Caco-2 (cell line): ENCODE measurements at regions of chr10 and their contacts with region 1.

Region 1: DNA sequence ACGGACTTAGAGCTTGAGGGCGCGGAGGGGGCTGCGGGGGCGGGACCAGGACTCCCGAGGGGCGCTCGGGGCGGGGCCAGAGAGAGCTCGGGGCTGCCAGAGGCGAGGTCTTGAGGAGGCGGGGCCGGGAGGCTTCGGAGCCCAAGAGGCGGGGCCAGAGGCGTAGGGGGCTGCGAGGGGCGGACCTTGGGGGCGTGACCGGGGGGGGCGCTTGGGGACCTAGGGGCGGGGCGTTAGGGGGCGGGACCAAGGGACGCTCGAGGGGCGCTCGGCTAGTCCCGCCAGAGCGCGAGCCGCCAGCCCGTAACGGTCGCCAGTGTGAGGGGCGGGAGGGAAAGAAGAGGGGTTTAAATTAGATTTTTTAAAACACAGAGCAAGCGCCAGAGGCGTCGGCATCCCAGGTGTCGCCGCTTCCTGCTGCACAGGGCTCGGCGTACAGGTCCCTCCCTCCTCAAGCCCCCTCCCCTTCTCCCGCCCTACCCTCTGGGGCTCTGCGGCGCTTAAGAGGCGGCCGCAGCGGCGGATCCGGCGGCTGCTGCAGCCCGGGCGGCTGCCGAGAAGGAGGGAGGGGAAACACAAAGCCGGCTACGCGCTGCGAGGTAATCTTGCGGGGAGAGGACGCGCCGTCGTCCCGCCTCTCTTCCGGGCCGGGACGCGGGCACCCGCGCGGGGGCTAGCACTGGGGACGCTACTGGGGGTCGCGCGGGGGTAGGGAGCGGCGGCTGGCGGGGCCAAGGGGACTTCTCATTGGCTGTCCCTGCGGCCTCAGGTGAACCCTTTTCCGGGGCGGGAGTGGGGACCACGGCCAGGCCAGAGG is at the start of gene ADD3:
- DNase-seq: peak; percentile 96 to 97
- H3K4me3 ChIP-seq: peak within 1 kb of the TSS; percentile 94
- H3K4me3 Mint-ChIP-seq: no peak within 1 kb of the TSS
- H3K27ac Mint-ChIP-seq: no peak within 1 kb of the TSS
- H3K4me1 ChIP-seq: peaks cover 47% of the 10 kb centered on the region
- H3K4me1 Mint-ChIP-seq: peaks cover 11% of the 10 kb centered on the region
- H3K27me3 ChIP-seq: no peaks in the 10 kb centered on the region
- H3K27me3 Mint-ChIP-seq: no peaks in the 10 kb centered on the region
- CTCF ChIP-seq: no peak
- total RNA-seq, gene ADD3: 236 and 264 TPM in 2 replicates

Region 2: GRCh38 chr10:108612485-108612884 is 1395.4 kb before region 1 on chr10:
- CTCF ChIA-PET with region 1: no interaction called
- POLR2A ChIA-PET with region 1: no interaction called
- intact Hi-C with region 1: no loop called
- DNase-seq: no peak
- H3K4me3 ChIP-seq: no peak overlapping the region
- H3K4me3 Mint-ChIP-seq: no peak overlapping the region
- H3K27ac Mint-ChIP-seq: no peak overlapping the region
- H3K4me1 ChIP-seq: no peaks in the 10 kb centered on the region
- H3K4me1 Mint-ChIP-seq: no peaks in the 10 kb centered on the region
- H3K27me3 ChIP-seq: no peaks in the 10 kb centered on the region
- H3K27me3 Mint-ChIP-seq: no peaks in the 10 kb centered on the region
- CTCF ChIP-seq: no peak

Region 3: GRCh38 chr10:109875151-109875568 is 132.7 kb before region 1 on chr10:
- CTCF ChIA-PET with region 1: no interaction called
- POLR2A ChIA-PET with region 1: no interaction called
- intact Hi-C with region 1: no loop called
- DNase-seq: no peak
- H3K4me3 ChIP-seq: no peak overlapping the region
- H3K4me3 Mint-ChIP-seq: no peak overlapping the region
- H3K27ac Mint-ChIP-seq: no peak overlapping the region
- H3K4me1 ChIP-seq: 0 out of 2 replicates have a peak, but pooled peaks cover 3% of the 10 kb centered on the region
- H3K4me1 Mint-ChIP-seq: no peaks in the 10 kb centered on the region
- H3K27me3 ChIP-seq: no peaks in the 10 kb centered on the region
- H3K27me3 Mint-ChIP-seq: no peaks in the 10 kb centered on the region
- CTCF ChIP-seq: no peak

Region 4: DNA sequence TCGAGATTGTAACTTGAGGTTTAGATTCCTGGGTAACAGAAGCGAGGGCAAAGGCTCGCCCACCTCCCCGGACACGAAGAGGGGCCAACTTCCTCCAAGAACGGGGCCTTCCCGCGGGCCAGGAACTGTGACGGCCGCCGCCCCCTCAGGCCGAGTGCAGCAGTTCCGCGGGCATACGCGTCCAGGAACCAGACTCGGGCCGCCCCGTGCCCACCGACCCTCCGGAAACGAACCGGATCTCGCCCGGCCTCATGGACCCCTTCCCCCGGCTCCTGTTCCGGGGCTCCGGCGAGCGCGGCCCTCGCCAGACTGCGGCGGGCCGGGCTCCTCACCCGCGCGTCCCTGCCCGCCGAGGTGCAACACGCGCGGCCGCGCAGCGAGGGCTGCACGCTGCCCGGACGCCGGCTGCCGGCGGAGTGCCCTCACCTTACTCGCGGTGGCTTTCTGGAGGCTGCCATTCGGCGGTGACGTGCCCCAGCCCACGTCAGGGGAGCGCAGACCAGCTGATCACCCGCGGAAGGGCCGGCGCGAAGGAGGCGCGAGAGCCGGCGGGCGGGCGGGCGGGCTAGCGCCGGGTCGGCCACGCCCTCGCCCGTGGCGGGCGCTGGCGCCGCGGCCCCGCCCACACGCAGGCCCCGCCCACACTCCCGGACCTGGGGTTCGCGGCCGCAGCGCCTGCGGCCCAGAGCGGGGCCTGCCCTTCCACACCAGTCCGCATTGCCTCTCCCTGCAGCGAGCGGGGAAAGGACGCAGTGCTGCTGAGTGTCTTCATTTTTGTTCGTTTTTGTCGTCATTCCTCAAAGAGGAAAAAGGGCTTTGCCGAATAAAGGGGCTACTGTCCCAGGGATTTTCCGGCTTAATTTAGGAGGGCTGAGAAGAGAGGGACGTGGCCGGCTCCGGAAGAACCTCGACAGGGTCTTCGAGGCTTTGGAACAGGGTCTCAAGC is 84.7 kb before region 1 on chr10 and contains the start of gene XPNPEP1:
- CTCF ChIA-PET with region 1: no interaction called
- POLR2A ChIA-PET with region 1: interaction called, 4 read pairs
- intact Hi-C with region 1: loop called (anchors 2 kb)
- DNase-seq: peak; percentile 87 to 89
- H3K4me3 ChIP-seq: peak within 1 kb of the TSS; percentile 97
- H3K4me3 Mint-ChIP-seq: peak within 1 kb of the TSS; percentile 63
- H3K27ac Mint-ChIP-seq: peak within 1 kb of the TSS; percentile 87
- H3K4me1 ChIP-seq: peaks cover 34% of the 10 kb centered on the region
- H3K4me1 Mint-ChIP-seq: peaks cover 35% of the 10 kb centered on the region
- H3K27me3 ChIP-seq: no peaks in the 10 kb centered on the region
- H3K27me3 Mint-ChIP-seq: no peaks in the 10 kb centered on the region
- CTCF ChIP-seq: no peak
- total RNA-seq, gene XPNPEP1: 76.6 and 92.4 TPM in 2 replicates

Region 5: DNA sequence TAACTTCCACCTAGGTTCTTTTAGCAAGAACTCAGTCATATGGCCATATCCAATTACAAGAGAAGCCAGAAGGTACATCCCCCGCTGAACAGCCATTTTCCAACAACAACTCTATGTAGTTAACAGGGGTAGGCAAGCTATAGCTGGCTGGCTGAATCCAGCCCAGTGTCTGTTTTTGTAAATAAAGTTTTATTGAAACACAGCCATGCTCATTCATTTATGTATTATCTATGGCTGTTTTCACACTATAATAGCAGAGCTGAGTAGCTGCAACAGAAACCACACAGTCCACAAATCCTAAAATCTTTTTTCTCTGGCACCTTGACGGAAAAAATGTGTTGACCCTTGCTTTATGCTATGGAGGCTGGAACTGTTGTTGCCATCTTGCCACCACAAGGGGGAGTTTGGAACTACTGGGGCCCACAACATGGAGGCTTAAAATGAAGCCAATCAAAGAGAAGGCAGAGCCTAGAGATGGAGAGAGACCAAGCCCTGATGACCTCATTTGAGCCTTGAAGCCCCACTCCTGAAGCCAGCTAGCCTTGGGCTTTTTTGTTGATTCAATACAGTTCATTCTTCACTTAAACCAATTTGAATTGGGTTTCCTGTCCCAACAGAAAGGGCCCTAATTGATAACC is 51.3 kb before region 1 on chr10:
- CTCF ChIA-PET with region 1: interaction called, 4 read pairs
- POLR2A ChIA-PET with region 1: interaction called, 3 read pairs
- intact Hi-C with region 1: loop called (anchors 1 kb)
- DNase-seq: peak; percentile 63 to 67
- H3K4me3 ChIP-seq: no peak overlapping the region
- H3K4me3 Mint-ChIP-seq: no peak overlapping the region
- H3K27ac Mint-ChIP-seq: no peak overlapping the region
- H3K4me1 ChIP-seq: peaks cover 6% of the 10 kb centered on the region; the same call in 1 of the 2 replicates
- H3K4me1 Mint-ChIP-seq: peaks cover 19% of the 10 kb centered on the region
- H3K27me3 ChIP-seq: no peaks in the 10 kb centered on the region
- H3K27me3 Mint-ChIP-seq: no peaks in the 10 kb centered on the region
- CTCF ChIP-seq: peak; percentile 75 to 78

Region 6: DNA sequence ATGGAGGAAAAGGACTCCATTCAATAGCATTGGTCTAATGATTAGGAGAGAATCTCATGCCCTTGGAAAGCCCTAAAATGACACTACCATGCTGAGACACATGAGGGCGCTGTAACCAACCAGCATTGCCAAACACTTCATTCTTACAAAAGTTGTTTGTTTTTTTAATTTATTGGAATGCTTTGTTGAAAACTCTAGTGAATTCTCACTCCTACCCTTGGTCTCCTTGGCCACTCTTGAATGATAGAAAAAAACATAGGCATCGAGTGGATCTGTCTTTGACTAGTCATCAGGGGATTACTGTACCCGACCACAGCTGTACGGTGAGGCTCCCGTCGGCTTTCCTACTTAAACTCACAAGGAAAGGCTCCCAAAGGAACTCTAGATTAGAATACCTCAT is 29.4 kb before region 1 on chr10:
- CTCF ChIA-PET with region 1: interaction called, 11 read pairs
- POLR2A ChIA-PET with region 1: interaction called, 3 read pairs
- intact Hi-C with region 1: loop called (anchors 1 kb)
- DNase-seq: peak; percentile 45 to 60
- H3K4me3 ChIP-seq: no peak overlapping the region
- H3K4me3 Mint-ChIP-seq: peak overlapping the region; percentile 55
- H3K27ac Mint-ChIP-seq: peak overlapping the region; percentile 79
- H3K4me1 ChIP-seq: peaks cover 47% of the 10 kb centered on the region
- H3K4me1 Mint-ChIP-seq: peaks cover 69% of the 10 kb centered on the region
- H3K27me3 ChIP-seq: no peaks in the 10 kb centered on the region
- H3K27me3 Mint-ChIP-seq: no peaks in the 10 kb centered on the region
- CTCF ChIP-seq: peak; percentile 42 to 65

Region 7: GRCh38 chr10:109996225-109996624 is 11.7 kb before region 1 on chr10:
- CTCF ChIA-PET with region 1: interaction called, 7 read pairs
- POLR2A ChIA-PET with region 1: interaction called, 6 read pairs
- intact Hi-C with region 1: loop called (anchors 1 kb)
- DNase-seq: no peak
- H3K4me3 ChIP-seq: peak overlapping the region; percentile 28
- H3K4me3 Mint-ChIP-seq: peak overlapping the region; percentile 73
- H3K27ac Mint-ChIP-seq: peak overlapping the region; percentile 82
- H3K4me1 ChIP-seq: peaks cover 92% of the 10 kb centered on the region
- H3K4me1 Mint-ChIP-seq: peaks cover 54% of the 10 kb centered on the region
- H3K27me3 ChIP-seq: no peaks in the 10 kb centered on the region
- H3K27me3 Mint-ChIP-seq: no peaks in the 10 kb centered on the region
- CTCF ChIP-seq: no peak

Region 8: DNA sequence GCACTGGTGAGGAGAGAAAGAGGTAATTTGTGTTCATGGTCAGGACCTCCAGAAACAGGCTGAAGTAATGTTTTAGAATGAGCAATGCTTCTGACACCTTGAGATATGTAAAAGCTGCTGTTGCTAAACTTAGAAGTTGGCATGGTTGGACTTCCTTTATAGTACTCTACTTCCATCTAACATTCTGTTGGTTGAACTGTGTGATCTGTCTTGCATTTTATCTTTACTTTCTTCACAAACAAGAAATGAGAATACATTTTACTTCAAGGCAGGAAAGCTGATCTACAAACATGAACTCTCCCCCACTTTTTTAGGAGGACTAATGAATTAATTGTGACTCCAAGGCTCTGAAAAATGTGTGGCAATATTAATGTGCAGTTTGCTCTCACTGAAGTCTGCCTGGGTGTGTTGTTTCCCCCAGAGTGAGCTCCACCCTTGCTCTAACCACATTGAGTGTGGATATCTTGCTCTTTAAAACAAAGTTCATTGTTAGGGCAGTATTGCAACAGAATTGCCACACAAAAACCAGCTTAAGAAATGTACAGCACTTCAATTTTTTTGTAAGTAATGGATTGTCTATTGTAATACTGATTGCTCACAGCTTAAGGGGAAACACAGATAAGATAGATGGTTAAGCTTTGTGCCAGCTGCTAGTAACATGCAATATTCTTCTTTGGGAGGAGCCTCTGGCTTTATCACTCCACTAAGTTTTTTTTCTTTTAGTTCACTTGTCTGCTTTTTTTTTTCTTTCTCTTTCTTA is 68.8 kb after region 1 on chr10:
- CTCF ChIA-PET with region 1: interaction called, 5 read pairs
- POLR2A ChIA-PET with region 1: interaction called, 5 read pairs
- intact Hi-C with region 1: loop called (anchors 1 kb)
- DNase-seq: peak; percentile 50 to 69
- H3K4me3 ChIP-seq: no peak overlapping the region
- H3K4me3 Mint-ChIP-seq: peak overlapping the region; percentile 47
- H3K27ac Mint-ChIP-seq: peak overlapping the region; percentile 36
- H3K4me1 ChIP-seq: peaks cover 59% of the 10 kb centered on the region
- H3K4me1 Mint-ChIP-seq: peaks cover 53% of the 10 kb centered on the region
- H3K27me3 ChIP-seq: no peaks in the 10 kb centered on the region
- H3K27me3 Mint-ChIP-seq: no peaks in the 10 kb centered on the region
- CTCF ChIP-seq: no peak